ENCODE measurements at regions of chr14 and their contacts with region 1.

Region 1: DNA sequence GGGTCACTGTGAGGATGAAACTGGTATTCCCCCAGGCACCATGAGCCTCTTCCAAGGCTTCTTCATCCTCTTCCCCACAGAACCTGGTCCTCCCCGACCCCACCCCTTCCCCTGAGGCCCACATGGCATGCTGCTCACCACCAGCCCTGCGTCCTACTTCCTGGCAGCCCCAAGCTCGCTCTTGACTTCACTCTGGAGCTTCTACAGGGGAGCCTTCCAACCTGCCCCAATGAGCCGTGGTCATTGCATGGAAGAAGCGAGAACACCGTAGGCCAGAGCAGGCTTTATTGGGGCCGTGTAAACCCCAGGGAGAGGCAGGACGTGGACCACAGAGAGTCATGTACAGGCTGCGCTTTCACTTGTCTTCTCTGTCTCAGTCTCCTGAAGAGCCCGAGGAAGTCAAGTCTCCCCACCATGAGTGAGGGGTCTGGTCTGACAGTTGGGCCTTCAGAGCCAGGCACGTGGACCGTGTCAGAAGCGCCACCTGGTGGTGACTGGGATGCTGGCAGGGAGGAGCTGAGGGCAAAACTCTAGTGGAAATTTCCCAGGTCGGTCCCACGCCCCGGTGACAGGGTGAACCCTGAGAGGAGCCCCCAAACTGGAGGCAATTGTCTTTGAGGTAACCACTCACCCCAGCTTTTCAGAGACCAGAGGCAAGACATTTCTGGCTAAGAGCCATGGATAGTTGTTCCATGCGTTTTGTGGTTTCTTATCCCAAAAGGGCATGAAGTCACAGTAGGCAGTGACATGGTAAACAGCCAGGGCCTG is 17.5 kb downstream of the RPS6KL1 start:
- DNase-seq: peak; percentile 52
- H3K4me3 ChIP-seq: no peak overlapping the region
- H3K27ac ChIP-seq: no peak overlapping the region
- H3K4me1 ChIP-seq: peaks cover 5% of the 10 kb centered on the region
- H3K27me3 ChIP-seq: no peaks in the 10 kb centered on the region
- CTCF ChIP-seq: peak; percentile 94 to 95
- POLR2A ChIP-seq: no peak

Region 2: GRCh38 chr14:74867673-74868072 is 37.9 kb before region 1 on chr14:
- CTCF ChIA-PET with region 1: interaction called, 468 read pairs
- POLR2A ChIA-PET with region 1: no interaction called
- dilution Hi-C with region 1: no loop called
- intact Hi-C with region 1: no loop called
- DNase-seq: peak; percentile 71
- H3K4me3 ChIP-seq: no peak overlapping the region
- H3K27ac ChIP-seq: no peak overlapping the region
- H3K4me1 ChIP-seq: no peaks in the 10 kb centered on the region
- H3K27me3 ChIP-seq: peaks cover 5 to 9% of the 10 kb centered on the region in 2 experiments
- CTCF ChIP-seq: no peak
- POLR2A ChIP-seq: no peak

Region 3: DNA sequence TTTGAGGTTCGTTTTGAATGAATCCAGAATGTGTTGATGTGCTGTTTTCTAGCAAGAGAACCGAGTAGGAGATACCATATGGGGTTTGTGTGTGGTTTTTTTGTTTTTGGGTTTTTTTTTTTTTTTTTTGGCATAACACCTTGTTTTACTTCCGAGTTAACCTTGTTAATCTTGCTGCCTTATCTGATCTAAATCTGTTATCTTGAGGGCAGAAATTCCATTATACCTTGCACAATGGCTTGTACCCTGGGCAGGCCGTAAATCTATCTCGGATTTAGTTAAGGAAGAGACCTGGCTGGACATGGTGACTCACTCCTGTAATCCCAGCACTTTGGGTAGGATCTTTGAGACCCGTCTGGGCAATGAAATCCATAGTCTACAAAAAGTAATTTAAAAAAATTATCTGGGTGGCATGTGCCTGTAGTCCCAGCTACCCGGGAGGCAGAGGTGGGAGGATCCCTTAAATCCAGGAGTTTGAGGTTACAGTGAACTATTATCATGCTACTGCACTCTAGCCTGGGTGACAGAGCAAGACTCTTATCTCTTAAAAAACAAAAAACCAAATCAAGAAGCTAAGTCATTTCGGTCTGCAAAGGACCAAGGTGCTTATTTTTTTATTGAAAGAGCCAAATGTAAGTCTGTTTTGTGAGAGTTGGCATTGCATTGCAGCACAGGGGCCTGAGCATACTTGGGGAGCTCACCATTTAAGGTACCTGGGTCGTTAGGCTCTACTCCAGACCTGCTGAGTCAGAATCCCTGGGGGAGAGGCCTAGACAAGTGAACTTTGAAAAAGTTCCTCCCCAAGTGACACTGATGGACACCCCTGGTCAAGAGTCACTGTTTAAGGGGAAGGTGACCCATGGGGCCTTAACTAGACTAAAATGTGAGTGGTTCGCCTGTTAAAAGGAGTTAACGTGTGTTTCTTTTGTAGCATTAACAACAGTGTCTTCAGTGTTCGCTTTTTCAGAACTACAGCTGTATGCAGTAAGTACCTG is 17.1 kb before region 1 on chr14:
- CTCF ChIA-PET with region 1: interaction called, 41 read pairs
- POLR2A ChIA-PET with region 1: no interaction called
- dilution Hi-C with region 1: no loop called
- intact Hi-C with region 1: no loop called
- DNase-seq: no peak
- H3K4me3 ChIP-seq: no peak overlapping the region
- H3K27ac ChIP-seq: no peak overlapping the region
- H3K4me1 ChIP-seq: peaks cover 18% of the 10 kb centered on the region
- H3K27me3 ChIP-seq: no peaks in the 10 kb centered on the region
- CTCF ChIP-seq: no peak
- POLR2A ChIP-seq: no peak

Region 4: DNA sequence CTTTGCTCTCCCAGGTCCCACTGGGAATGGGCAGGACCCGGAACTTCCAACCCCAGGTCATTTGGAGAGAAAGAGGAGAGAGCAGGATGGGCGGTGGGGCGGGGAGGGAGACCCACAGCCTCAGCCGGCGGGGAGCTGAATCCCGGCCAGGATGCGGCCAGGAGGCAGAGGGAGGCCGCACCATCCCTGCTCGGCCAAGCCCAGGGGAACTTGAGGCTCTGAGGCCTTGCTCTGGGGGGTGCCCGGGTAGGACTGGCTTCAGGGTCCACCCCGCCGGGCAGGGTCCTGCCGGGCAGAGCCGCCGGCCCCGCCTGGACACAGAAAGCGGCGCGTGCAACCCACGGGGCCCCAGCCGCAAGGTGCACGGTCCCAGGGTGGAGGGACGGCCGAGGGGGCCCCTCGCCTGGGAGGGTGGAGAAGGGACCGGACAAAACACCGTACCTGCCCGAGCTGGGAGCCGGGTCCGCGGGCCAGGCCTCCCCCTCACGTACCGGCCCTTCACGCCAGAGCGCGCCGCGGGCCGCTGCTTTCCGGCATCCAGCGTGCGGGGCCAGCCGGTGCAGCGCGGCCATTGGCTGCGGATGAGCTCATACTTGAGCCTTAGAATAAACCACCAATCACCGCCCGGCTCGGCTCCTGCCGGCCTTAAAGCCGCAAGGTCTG is 17.3 kb after region 1 on chr14 and contains the start of gene RPS6KL1:
- CTCF ChIA-PET with region 1: interaction called, 17 read pairs
- POLR2A ChIA-PET with region 1: no interaction called
- dilution Hi-C with region 1: no loop called
- intact Hi-C with region 1: no loop called
- DNase-seq: peak; percentile 87
- H3K4me3 ChIP-seq: peak within 1 kb of the TSS; percentile 55 to 69 (median 58)
- H3K27ac ChIP-seq: peak within 1 kb of the TSS; percentile 50
- H3K4me1 ChIP-seq: peaks cover 5% of the 10 kb centered on the region
- H3K27me3 ChIP-seq: no peaks in the 10 kb centered on the region
- CTCF ChIP-seq: no peak
- POLR2A ChIP-seq: no peak
- total RNA-seq, gene RPS6KL1: 23.8 and 25.6 TPM in 2 replicates

Region 5: GRCh38 chr14:74938531-74939495 is 33.3 kb after region 1 on chr14:
- CTCF ChIA-PET with region 1: interaction called, 12 read pairs
- POLR2A ChIA-PET with region 1: no interaction called
- dilution Hi-C with region 1: no loop called
- intact Hi-C with region 1: no loop called
- DNase-seq: no peak
- H3K4me3 ChIP-seq: no peak overlapping the region
- H3K27ac ChIP-seq: no peak overlapping the region
- H3K4me1 ChIP-seq: peaks cover 38% of the 10 kb centered on the region
- H3K27me3 ChIP-seq: no peaks in the 10 kb centered on the region
- CTCF ChIP-seq: no peak
- POLR2A ChIP-seq: no peak

Region 6: DNA sequence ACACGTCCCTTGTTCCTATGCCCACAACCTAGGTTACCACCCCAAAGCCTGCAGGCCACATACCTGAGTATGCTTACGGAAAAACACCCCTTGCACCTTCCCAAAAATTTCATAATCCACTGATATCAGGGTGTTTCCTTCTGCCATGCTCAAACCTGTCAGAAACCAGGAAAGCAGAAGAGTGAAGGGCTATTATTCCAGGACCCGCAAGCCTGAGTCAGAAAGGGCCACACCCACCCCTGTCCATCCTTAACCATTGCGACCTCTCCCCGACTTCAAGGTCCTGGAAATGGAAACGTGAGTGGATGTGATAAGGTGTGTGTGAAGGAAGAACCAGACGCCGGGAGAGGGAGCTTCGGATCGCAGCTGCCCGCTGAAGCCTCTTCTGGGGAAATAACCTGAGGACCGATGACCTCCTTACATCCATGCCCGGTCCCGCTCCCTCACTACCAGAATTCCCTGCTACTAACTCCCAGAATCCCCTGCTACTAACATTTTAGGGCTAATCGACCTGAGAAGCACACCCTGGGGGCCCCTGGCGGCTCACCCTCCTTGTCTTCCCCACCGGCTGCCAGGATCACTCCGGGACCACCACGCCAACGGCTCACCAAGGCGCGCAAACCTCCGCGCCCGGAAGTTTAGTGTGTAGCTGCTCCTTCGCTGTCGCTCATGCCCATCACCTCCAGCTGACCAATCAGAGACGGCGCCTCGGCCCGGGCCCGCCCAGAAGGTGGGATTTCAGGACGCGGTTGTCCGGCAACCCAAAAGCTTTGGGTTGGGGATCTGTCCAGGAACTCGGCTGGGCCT is 158.1 kb after region 1 on chr14 and contains the start of gene ACYP1:
- CTCF ChIA-PET with region 1: interaction called, 13 read pairs
- POLR2A ChIA-PET with region 1: no interaction called
- dilution Hi-C with region 1: no loop called
- intact Hi-C with region 1: no loop called
- DNase-seq: peak; percentile 93
- H3K4me3 ChIP-seq: peak within 1 kb of the TSS; percentile 63 to 79 (median 75)
- H3K27ac ChIP-seq: peak within 1 kb of the TSS; percentile 54
- H3K4me1 ChIP-seq: peaks cover 32% of the 10 kb centered on the region
- H3K27me3 ChIP-seq: no peaks in the 10 kb centered on the region
- CTCF ChIP-seq: no peak
- POLR2A ChIP-seq: peak; percentile 39
- total RNA-seq, gene ACYP1: 34.2 and 37.5 TPM in 2 replicates

Region 7: DNA sequence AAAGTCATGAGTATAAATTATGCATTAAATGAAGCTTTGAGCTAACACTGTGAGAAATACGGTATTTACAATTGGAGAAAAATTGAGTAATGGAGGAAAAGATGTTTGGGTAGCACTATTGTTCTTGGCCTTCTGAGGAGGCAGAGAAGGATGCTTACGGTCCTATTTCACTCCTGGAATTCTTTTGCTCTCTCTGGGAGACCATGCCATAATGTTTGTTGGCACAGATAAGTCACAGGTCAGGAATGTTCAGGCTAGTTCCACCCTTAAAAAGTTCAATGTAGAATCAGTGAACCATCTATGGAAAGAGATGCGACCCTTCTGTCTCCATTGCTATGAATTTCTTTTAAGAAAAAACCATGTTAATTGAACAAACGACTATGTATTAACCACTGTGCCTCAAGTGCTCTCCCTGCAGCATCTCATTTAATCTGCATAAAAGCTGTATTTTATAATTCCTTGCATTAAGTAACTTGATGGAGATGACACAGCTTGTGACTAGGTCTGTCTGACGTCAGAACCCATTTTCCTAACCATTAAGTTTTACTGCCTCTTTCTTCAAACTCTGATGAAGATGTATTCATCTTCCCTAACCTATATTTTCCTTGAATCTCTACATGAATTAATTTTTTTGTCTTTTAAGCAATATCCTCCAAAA is 626.2 kb after region 1 on chr14:
- CTCF ChIA-PET with region 1: no interaction called
- POLR2A ChIA-PET with region 1: no interaction called
- dilution Hi-C with region 1: no loop called
- intact Hi-C with region 1: no loop called
- DNase-seq: no peak
- H3K4me3 ChIP-seq: no peak overlapping the region
- H3K27ac ChIP-seq: no peak overlapping the region
- H3K4me1 ChIP-seq: peaks cover 15% of the 10 kb centered on the region
- H3K27me3 ChIP-seq: no peaks in the 10 kb centered on the region
- CTCF ChIP-seq: no peak
- POLR2A ChIP-seq: no peak

Measured in endothelial cell of umbilical vein (primary cell).